Upper lobe of right lung (tissue), 1 donor: ENCODE measurements at regions of chr20 and their contacts with region 1.

Region 1: DNA sequence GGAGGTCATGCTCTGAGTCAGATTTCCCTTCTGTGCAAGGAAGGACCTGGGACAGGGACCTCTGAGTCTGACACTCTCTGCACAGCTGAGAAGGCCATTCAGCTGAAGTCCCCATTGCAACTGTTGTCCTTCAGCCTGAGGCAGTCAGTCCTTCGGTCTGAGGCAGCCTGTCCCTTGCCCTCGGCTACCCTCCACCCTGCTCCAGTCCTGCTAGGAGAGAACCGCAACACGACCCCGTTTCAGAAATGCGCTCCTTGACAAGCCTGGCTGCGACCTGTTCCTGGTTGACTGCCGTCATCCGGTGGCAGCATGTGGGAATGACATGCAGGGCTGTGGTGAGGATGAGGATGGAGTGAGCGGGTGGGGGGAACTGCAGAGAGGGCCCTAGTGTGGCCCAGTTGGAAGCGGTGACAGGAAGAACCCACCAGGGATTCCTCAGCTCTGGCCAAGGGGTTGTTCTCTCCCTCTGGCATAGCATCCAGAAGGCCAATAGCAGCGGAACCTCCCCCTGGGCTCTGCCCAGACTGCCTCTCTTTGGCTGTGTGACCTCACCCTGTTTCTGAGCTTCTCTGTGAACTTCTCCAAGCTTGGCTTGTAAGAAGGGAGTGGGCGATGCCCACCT is 40.3 kb upstream of the ANGPT4 start:
- DNase-seq: peak; percentile 81
- ATAC-seq: peak; percentile 88
- H3K4me3 ChIP-seq: no peak overlapping the region
- H3K27ac ChIP-seq: no peak overlapping the region
- H3K4me1 ChIP-seq: no peaks in the 10 kb centered on the region
- H3K27me3 ChIP-seq: peaks cover 11% of the 10 kb centered on the region
- CTCF ChIP-seq: peak; percentile 99

Region 2: GRCh38 chr20:815914-816606 is 140.4 kb before region 1 on chr20:
- intact Hi-C with region 1: loop called (anchors 5 kb)
- DNase-seq: peak; percentile 76
- ATAC-seq: peak; percentile 85
- H3K4me3 ChIP-seq: no peak overlapping the region
- H3K27ac ChIP-seq: no peak overlapping the region
- H3K4me1 ChIP-seq: no peaks in the 10 kb centered on the region
- H3K27me3 ChIP-seq: peaks cover 4% of the 10 kb centered on the region
- CTCF ChIP-seq: peak; percentile 100

Region 3: DNA sequence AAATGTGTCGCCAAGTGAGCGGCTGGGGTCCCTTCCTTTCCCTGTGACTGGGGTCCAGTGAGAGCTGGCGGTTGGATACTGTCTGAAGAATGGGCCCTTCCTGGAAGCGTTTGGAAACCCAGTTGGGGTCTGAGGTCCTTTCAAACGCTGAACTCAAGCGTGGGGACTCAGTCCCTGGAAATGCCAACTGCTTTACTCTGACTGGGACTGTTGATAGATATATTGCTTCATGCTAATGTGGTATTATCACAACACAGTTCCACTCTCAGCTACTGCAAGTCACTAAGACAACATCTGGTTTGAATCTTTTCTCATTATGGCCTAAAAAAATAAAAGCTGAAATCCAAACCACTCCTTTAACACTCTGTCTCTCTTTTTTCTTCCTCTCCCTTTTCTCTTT is 138.3 kb after region 1 on chr20:
- intact Hi-C with region 1: no loop called
- DNase-seq: no peak
- ATAC-seq: no peak
- H3K4me3 ChIP-seq: no peak overlapping the region
- H3K27ac ChIP-seq: no peak overlapping the region
- H3K4me1 ChIP-seq: no peaks in the 10 kb centered on the region
- H3K27me3 ChIP-seq: no peaks in the 10 kb centered on the region
- CTCF ChIP-seq: no peak

Region 4: DNA sequence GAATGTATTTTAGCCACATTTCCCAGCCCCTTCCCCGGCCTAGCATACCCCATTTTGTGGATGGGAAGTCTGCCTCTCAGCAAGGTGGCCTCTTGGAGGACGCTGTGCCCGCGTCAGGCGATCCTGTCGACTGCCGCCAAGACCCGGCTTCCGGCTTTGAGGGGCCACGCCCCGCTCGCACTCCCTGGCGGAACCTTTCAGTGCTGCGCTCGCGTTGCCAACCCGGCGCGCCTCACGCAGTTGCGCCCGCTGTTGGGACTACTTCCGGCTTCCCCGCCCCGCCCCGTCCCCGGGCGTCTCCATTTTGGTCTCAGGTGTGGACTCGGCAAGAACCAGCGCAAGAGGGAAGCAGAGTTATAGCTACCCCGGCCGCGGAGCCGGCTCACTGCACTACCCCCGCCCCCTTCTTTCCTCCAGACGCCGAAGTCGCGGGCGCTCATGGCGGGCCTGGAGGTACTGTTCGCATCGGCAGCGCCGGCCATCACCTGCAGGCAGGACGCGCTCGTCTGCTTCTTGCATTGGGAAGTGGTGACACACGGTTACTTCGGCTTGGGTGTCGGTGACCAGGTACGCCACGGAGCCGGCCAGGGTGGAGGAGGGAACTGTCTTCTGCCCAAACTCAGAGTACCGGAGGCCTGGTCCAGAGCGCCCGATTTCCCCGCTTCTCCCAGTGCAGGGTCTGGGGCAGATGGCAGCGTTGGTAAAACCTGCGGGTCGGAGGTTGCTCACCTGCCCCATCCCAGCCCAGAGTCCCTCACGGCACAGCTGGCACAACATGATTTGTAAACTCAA is 162.1 kb after region 1 on chr20 and contains the start of gene PSMF1:
- intact Hi-C with region 1: no loop called
- DNase-seq: peak; percentile 98
- ATAC-seq: peak; percentile 99
- H3K4me3 ChIP-seq: peak within 1 kb of the TSS; percentile 100
- H3K27ac ChIP-seq: peak within 1 kb of the TSS; percentile 85
- H3K4me1 ChIP-seq: peaks cover 45% of the 10 kb centered on the region
- H3K27me3 ChIP-seq: no peaks in the 10 kb centered on the region
- CTCF ChIP-seq: no peak
- total RNA-seq, gene PSMF1: 133 TPM

Region 5: GRCh38 chr20:1242530-1242929 is 286.1 kb after region 1 on chr20:
- intact Hi-C with region 1: no loop called
- DNase-seq: no peak
- ATAC-seq: no peak
- H3K4me3 ChIP-seq: no peak overlapping the region
- H3K27ac ChIP-seq: no peak overlapping the region
- H3K4me1 ChIP-seq: no peaks in the 10 kb centered on the region
- H3K27me3 ChIP-seq: no peaks in the 10 kb centered on the region
- CTCF ChIP-seq: no peak